PC-9 (cell line): ENCODE measurements at regions of chr3 and their contacts with region 1.

Region 1: GRCh38 chr3:139353920-139354556 is 10.2 kb downstream of the MRPS22 start:
- DNase-seq: peak; percentile 25 to 42
- H3K4me3 ChIP-seq: no peak overlapping the region
- H3K27ac ChIP-seq: no peak overlapping the region
- H3K4me1 ChIP-seq: no peaks in the 10 kb centered on the region
- H3K27me3 ChIP-seq: no peaks in the 10 kb centered on the region
- CTCF ChIP-seq: peak; percentile 74

Region 2: GRCh38 chr3:139380575-139380974 is 26.5 kb after region 1 on chr3:
- CTCF ChIA-PET with region 1: no interaction called
- POLR2A ChIA-PET with region 1: no interaction called
- intact Hi-C with region 1: loop called (anchors 2 kb)
- DNase-seq: no peak
- H3K4me3 ChIP-seq: no peak overlapping the region
- H3K27ac ChIP-seq: no peak overlapping the region
- H3K4me1 ChIP-seq: no peaks in the 10 kb centered on the region
- H3K27me3 ChIP-seq: no peaks in the 10 kb centered on the region
- CTCF ChIP-seq: no peak